ENCODE measurements at regions of chr3 and their contacts with region 1.

Region 1: DNA sequence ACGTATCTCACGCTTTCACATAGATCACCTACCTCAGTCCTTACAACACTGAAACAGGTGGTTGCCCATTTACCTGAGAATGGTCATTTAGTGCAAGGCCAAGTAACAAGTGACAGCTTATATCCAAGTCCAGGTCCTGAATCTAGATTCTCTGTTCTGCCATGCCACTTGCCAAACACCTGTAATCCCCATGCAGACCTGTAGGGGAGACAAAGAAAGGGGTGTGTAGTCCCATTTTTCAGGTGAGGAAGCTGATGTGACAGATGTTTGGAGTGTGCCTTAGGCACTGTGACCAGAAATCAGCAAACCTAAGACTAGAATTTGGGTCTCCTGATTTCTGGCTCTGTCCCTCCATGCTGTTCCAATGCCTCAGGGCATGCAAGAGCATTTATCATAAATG is 12.7 kb downstream of the ZNF35 start:
- DNase-seq: no peak
- ATAC-seq: no peak
- H3K4me3 ChIP-seq: no peak overlapping the region
- H3K27ac ChIP-seq: no peak overlapping the region
- H3K4me1 ChIP-seq: no peaks in the 10 kb centered on the region
- H3K27me3 ChIP-seq: no peaks in the 10 kb centered on the region
- CTCF ChIP-seq: no peak
- POLR2A ChIP-seq: no peak
- RAD21 ChIP-seq: no peak

Region 2: DNA sequence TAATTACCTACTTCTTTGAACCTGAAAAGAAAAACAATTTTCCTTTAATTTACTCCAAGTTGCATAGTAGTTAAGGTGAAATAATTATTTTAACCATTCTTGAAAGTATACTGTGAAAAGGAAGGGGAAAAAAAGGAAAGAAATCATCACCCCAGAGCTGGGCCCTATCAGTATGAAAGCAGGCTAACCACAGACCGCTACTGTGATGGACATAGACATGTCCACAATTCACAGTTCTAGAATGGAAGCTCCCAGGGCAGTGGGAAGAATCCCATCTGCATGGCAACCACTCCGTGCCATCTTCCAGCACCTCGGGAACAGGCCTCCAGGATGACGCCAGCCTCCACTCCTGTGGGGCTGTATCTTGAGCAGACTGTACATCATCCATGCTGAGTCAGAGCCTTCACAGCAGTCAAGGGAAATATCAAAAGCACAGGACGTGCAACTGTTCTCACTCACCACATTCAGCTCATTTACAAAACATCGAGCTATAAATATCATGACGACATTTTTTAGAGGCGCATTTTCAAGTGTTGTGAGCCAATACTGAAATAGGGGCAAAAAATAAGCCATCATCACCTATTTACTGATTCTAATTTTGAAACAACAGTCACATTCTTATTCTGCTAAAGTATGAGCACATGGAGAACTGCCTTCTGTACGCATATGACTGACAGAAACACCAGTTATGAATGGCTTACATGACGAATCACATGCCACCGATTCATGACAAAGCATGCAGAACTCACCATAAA is 1255.1 kb before region 1 on chr3:
- CTCF ChIA-PET with region 1: no interaction called
- POLR2A ChIA-PET with region 1: interaction called, 14 read pairs
- dilution Hi-C with region 1: no loop called
- in situ Hi-C with region 1: no loop called
- intact Hi-C with region 1: no loop called
- DNase-seq: peak; percentile 92
- ATAC-seq: peak; percentile 92
- H3K4me3 ChIP-seq: no peak overlapping the region
- H3K27ac ChIP-seq: no peak overlapping the region
- H3K4me1 ChIP-seq: peaks cover 4% of the 10 kb centered on the region
- H3K27me3 ChIP-seq: no peaks in the 10 kb centered on the region
- CTCF ChIP-seq: no peak
- POLR2A ChIP-seq: no peak
- RAD21 ChIP-seq: no peak

Measured in IMR-90 (cell line).